ENCODE measurements at regions of chr14 and their contacts with region 1.

Region 1: DNA sequence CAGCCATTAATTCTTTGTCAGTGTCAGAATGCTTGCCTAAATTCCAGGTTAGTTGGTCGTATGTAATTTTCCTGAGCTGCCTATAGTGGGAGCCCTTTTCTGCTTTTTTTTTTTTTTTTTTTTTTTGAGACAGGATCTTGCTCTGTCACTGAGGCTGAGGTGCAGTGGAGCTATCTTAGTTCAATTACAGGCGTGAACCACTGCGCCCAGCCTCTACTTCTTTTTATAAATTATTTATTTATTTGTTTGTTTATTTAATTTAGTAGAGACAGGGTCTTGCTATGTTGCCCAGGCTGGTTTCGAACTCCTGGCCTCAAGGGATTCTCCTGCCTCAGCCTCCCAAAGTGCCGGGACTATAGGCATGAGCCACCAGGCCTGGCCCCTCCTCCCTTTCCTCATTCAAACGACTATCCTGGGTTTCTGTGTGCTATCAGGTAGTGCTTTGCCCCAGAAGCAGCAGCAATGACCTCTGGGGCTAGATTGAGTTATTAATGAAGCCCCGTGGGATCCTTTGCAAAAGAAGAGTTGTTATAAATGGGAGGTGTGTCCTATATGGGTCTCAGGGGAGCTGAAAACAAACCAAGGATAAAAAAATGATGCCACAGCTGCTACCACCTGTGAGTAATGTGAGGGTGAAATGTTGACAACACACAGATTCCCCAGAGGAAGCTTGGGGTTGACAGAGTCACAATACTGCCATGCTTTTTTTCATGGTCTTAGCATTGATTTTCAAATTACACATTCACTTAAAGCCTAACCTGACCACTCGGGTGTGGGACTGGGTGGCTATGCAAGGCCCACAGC is 34.6 kb upstream of the NFKBIA start:
- DNase-seq: no peak
- H3K4me3 ChIP-seq: no peak overlapping the region
- H3K27ac ChIP-seq: no peak overlapping the region
- H3K4me1 ChIP-seq: no peaks in the 10 kb centered on the region
- H3K27me3 ChIP-seq: no peaks in the 10 kb centered on the region
- CTCF ChIP-seq: peak; percentile 62 to 73

Region 2: DNA sequence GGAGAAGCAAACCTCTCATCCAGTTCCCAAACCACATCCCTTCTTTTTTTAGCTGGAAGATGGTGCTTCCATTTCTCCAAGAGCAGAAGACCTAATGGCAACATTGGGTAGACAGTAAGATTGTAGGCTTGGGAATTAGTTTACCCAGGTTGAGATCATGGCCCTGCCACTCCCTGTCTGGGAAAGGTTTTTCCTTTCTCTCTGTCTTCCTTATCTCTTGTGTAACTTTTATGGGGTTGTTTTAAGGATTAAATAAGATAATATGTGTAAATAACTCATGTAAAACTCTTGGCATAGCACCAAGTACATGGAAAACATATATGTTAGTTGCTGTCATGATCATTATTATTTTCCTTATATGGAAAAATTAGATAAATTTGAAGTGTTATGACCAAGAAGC is 170.2 kb before region 1 on chr14:
- CTCF ChIA-PET with region 1: interaction called, 10 read pairs
- dilution Hi-C with region 1: no loop called
- in situ Hi-C with region 1: no loop called
- intact Hi-C with region 1: no loop called
- DNase-seq: no peak
- H3K4me3 ChIP-seq: no peak overlapping the region
- H3K27ac ChIP-seq: no peak overlapping the region
- H3K4me1 ChIP-seq: no peaks in the 10 kb centered on the region
- H3K27me3 ChIP-seq: no peaks in the 10 kb centered on the region
- CTCF ChIP-seq: no peak

Region 3: DNA sequence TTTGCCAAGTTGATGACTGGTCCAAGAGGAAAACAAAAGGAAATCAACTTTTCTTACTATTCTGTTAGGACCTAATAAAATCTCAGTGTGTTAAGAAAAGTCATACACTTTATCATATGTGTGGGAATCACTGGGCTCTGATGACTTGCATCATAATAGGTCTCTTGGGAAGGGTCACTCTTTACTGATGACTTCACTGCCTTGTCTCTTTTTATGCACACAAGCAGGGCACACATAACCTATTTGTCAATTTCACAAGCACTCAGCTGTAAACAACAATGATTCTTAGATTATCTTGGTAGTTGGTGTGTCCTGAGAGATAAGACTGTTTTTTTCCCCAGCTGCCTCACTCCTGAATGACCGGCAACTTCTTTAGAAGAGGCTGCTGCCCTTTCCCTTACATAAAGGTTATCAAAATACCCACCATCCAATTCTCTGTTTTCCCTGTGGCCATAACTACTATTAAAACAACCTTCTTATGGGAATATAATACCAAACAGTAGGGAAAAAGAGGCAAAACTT is 43.9 kb after region 1 on chr14:
- CTCF ChIA-PET with region 1: interaction called, 13 read pairs
- dilution Hi-C with region 1: no loop called
- in situ Hi-C with region 1: no loop called
- intact Hi-C with region 1: no loop called
- DNase-seq: no peak
- H3K4me3 ChIP-seq: no peak overlapping the region
- H3K27ac ChIP-seq: no peak overlapping the region
- H3K4me1 ChIP-seq: no peaks in the 10 kb centered on the region
- H3K27me3 ChIP-seq: peaks cover 4% of the 10 kb centered on the region
- CTCF ChIP-seq: no peak

Region 4: DNA sequence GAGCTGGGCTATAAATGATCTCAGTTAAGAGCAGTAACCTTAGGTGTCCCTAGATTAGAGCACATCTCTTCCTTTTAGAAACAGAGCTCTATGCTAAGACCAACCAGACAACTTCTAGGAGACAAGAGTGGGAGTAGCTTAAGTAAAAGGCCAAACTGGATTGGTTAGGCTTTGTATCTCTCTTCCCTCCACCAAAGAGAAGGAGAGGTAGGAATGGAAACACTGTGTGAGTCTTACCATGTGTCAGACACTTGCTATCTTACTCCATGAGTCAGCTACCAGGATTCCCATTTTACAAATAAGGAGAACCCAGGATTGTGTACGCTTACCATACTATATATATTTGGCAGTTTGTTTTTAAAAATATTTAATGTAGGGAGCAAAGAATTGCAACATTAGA is 1345.4 kb after region 1 on chr14:
- CTCF ChIA-PET with region 1: interaction called, 26 read pairs
- dilution Hi-C with region 1: no loop called
- in situ Hi-C with region 1: no loop called
- intact Hi-C with region 1: no loop called
- DNase-seq: no peak
- H3K4me3 ChIP-seq: no peak overlapping the region
- H3K27ac ChIP-seq: no peak overlapping the region
- H3K4me1 ChIP-seq: no peaks in the 10 kb centered on the region
- H3K27me3 ChIP-seq: no peaks in the 10 kb centered on the region
- CTCF ChIP-seq: no peak